ENCODE measurements at regions of chr3 and their contacts with region 1.

Region 1: GRCh38 chr3:32975891-32976595 is 24.6 kb downstream of the CCR4 start:
- DNase-seq: peak; percentile 10
- H3K4me3 ChIP-seq: no peak overlapping the region
- H3K27ac ChIP-seq: no peak overlapping the region
- H3K4me1 ChIP-seq: no peaks in the 10 kb centered on the region
- H3K27me3 ChIP-seq: no peaks in the 10 kb centered on the region
- CTCF ChIP-seq: no peak

Region 2: GRCh38 chr3:31420311-31420710 is 1555.7 kb before region 1 on chr3:
- CTCF ChIA-PET with region 1: interaction called, 10 read pairs
- POLR2A ChIA-PET with region 1: no interaction called
- intact Hi-C with region 1: no loop called
- DNase-seq: no peak
- H3K4me3 ChIP-seq: no peak overlapping the region
- H3K27ac ChIP-seq: no peak overlapping the region
- H3K4me1 ChIP-seq: no peaks in the 10 kb centered on the region
- H3K27me3 ChIP-seq: no peaks in the 10 kb centered on the region
- CTCF ChIP-seq: no peak

Region 3: DNA sequence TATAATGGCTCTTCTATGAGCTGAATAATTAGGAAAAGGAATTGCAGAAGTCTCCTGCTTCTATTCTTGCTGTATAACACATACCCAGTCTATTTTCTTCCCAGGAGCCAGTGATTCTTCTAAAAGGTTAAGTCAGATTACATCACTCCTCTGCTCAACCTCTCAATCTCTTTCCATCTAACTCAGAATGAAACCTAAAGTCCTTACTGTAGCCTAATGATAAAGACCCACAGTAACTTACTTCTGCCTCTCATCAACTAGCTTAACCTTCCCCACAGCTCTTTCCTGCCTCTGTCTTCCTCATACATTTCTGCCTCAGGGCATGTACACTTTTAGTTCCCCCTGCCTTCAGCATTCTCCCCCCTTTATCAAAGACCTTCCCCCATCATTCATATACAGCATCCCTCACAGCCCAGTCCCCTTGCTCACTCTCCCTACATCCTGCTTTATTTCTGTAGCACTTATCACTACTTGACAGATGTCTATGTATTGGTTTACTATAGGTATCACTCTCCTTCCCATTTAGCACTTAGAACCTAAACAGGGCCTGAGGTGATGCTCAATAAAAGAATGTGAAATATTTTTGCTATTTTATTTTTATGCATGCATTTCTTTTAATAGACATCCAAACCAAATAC is 444.9 kb before region 1 on chr3:
- CTCF ChIA-PET with region 1: no interaction called
- POLR2A ChIA-PET with region 1: interaction called, 13 read pairs
- intact Hi-C with region 1: no loop called
- DNase-seq: no peak
- H3K4me3 ChIP-seq: no peak overlapping the region
- H3K27ac ChIP-seq: no peak overlapping the region
- H3K4me1 ChIP-seq: no peaks in the 10 kb centered on the region
- H3K27me3 ChIP-seq: no peaks in the 10 kb centered on the region
- CTCF ChIP-seq: no peak

Region 4: GRCh38 chr3:32743934-32744333 is 232.1 kb before region 1 on chr3:
- CTCF ChIA-PET with region 1: no interaction called
- POLR2A ChIA-PET with region 1: no interaction called
- intact Hi-C with region 1: no loop called
- DNase-seq: peak; percentile 26
- H3K4me3 ChIP-seq: no peak overlapping the region
- H3K27ac ChIP-seq: no peak overlapping the region
- H3K4me1 ChIP-seq: no peaks in the 10 kb centered on the region
- H3K27me3 ChIP-seq: no peaks in the 10 kb centered on the region
- CTCF ChIP-seq: no peak

Region 5: GRCh38 chr3:33155301-33155700 is 179.3 kb after region 1 on chr3:
- CTCF ChIA-PET with region 1: no interaction called
- POLR2A ChIA-PET with region 1: no interaction called
- intact Hi-C with region 1: no loop called
- DNase-seq: no peak
- H3K4me3 ChIP-seq: no peak overlapping the region
- H3K27ac ChIP-seq: no peak overlapping the region
- H3K4me1 ChIP-seq: peaks cover 5% of the 10 kb centered on the region
- H3K27me3 ChIP-seq: no peaks in the 10 kb centered on the region
- CTCF ChIP-seq: no peak